CD4-positive, alpha-beta T cell (primary cell): ENCODE measurements at regions of chr3 and their contacts with region 1.

Region 1: GRCh38 chr3:15804553-15805095 is 6.8 kb upstream of the ANKRD28 start:
- DNase-seq: peak in 2 of 14 experiments; percentile 17 to 34
- ATAC-seq: peak; percentile 21
- H3K4me3 ChIP-seq: no peak overlapping the region
- H3K4me3 Mint-ChIP-seq: no peak overlapping the region
- H3K27ac ChIP-seq: peak overlapping the region in 1 of 2 donors; percentile 1
- H3K27ac Mint-ChIP-seq: no peak overlapping the region
- H3K4me1 ChIP-seq: peaks cover 8% of the 10 kb centered on the region
- H3K4me1 Mint-ChIP-seq: peaks cover 74% of the 10 kb centered on the region
- H3K27me3 ChIP-seq: no peaks in the 10 kb centered on the region
- H3K27me3 Mint-ChIP-seq: no peaks in the 10 kb centered on the region
- CTCF ChIP-seq: no peak

Region 2: DNA sequence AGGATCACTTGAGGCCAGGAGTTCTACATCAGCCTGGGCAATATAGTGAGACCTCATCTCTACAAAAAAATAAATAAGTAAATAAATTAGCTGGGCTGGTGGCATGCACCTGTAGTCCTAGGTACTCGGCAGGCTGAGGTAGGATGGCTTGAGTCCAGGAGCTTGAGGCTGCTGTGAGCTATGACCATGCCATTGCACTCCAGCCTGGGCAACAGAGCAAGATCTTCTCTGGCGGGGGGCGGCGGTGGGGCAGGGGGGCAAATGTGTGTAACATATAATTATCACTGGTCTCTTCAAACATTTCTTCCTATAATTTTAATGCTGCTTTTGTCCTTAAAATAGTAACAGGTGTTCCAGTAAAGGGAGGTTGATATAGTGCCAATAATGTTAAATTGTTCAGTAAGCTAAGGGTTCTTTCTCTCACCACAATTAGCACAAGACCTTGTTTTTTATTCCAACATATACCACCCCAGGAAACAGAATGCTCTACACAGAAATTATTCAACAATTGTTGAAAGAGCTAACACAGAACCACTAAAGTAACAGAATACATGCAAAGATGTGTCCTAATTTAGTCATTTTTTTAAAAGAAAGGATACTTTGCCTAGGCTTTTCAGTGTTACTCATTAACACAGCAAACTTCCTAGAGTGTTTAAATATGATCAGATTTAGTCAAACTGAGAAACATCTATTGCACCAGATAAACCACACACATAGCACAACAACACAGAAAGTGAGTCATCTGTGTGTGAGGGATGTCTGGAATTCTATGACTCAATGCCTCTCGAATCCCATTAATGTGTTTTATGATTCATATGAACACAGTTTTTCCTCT is 36.0 kb before region 1 on chr3:
- CTCF ChIA-PET with region 1: no interaction called
- POLR2A ChIA-PET with region 1: no interaction called
- intact Hi-C with region 1: loop called in 1 of 2 experiments (anchors 5 kb)
- DNase-seq: peak in 2 of 14 experiments; percentile 41 to 52
- ATAC-seq: no peak
- H3K4me3 ChIP-seq: no peak overlapping the region
- H3K4me3 Mint-ChIP-seq: no peak overlapping the region
- H3K27ac ChIP-seq: no peak overlapping the region
- H3K27ac Mint-ChIP-seq: no peak overlapping the region
- H3K4me1 ChIP-seq: no peaks in the 10 kb centered on the region
- H3K4me1 Mint-ChIP-seq: peaks cover 28% of the 10 kb centered on the region
- H3K27me3 ChIP-seq: no peaks in the 10 kb centered on the region
- H3K27me3 Mint-ChIP-seq: no peaks in the 10 kb centered on the region
- CTCF ChIP-seq: no peak

Region 3: DNA sequence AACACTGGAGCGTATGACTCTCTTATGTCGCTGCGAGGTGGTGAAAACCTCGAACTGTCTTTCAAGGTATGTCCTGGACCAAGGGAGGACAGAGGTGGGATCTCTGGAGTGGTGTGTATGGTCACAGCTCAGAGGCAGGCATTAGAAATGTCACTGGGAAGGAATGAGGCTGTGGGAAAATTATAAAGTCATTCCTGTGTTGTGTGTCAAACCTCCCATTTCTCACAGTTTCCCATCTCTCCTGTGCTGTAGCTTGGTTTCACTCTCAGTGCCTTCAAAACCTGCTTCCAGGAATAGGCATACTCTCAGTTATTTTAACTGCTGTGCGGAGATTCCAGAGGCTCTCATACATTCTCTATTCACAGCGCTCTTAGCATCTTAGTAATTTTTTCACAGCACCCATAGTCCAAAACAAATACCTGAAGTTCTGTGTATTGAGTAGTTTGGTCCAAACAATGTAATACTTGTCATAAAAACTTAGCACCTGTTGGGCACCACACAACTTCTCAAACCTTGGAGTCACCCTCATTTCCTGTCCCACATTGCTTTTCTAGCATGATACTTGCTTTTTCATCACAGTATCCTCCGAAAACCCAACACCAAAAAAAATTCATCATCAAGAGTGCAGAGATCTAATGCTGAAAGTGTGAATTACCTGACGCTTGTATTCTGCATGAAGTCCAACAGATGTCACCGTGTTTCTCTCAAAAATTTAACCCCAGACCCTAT is 406.7 kb after region 1 on chr3:
- CTCF ChIA-PET with region 1: no interaction called
- POLR2A ChIA-PET with region 1: no interaction called
- intact Hi-C with region 1: no loop called
- DNase-seq: no peak
- ATAC-seq: no peak
- H3K4me3 ChIP-seq: no peak overlapping the region
- H3K4me3 Mint-ChIP-seq: no peak overlapping the region
- H3K27ac ChIP-seq: no peak overlapping the region
- H3K27ac Mint-ChIP-seq: no peak overlapping the region
- H3K4me1 ChIP-seq: no peaks in the 10 kb centered on the region
- H3K4me1 Mint-ChIP-seq: no peaks in the 10 kb centered on the region
- H3K27me3 ChIP-seq: no peaks in the 10 kb centered on the region
- H3K27me3 Mint-ChIP-seq: no peaks in the 10 kb centered on the region
- CTCF ChIP-seq: no peak